ENCODE measurements at regions of chr12 and their contacts with region 1.

Region 1: GRCh38 chr12:66087365-66087943 is 43.1 kb downstream of the LLPH start:
- DNase-seq: no peak
- H3K4me3 ChIP-seq: no peak overlapping the region
- H3K27ac ChIP-seq: no peak overlapping the region
- H3K4me1 ChIP-seq: peaks cover 0 to 3% (median 0%) of the 10 kb centered on the region in 4 donors
- H3K27me3 ChIP-seq: no peaks in the 10 kb centered on the region
- CTCF ChIP-seq: peak; percentile 73 to 82 (median 74)
- EP300 ChIP-seq: no peak
- POLR2A ChIP-seq: no peak

Region 2: GRCh38 chr12:65556681-65557437 is 530.6 kb before region 1 on chr12:
- intact Hi-C with region 1: loop called (anchors 2 kb)
- DNase-seq: peak; percentile 93
- H3K4me3 ChIP-seq: no peak overlapping the region
- H3K27ac ChIP-seq: no peak overlapping the region
- H3K4me1 ChIP-seq: peaks cover 0 to 6% (median 2%) of the 10 kb centered on the region in 4 donors
- H3K27me3 ChIP-seq: no peaks in the 10 kb centered on the region
- CTCF ChIP-seq: peak; percentile 78 to 92 (median 85)
- EP300 ChIP-seq: no peak
- POLR2A ChIP-seq: no peak

Region 3: GRCh38 chr12:65602610-65603295 is 484.7 kb before region 1 on chr12:
- intact Hi-C with region 1: loop called (anchors 2 kb)
- DNase-seq: no peak
- H3K4me3 ChIP-seq: peak overlapping the region; percentile 12 to 38 (median 17)
- H3K27ac ChIP-seq: peak overlapping the region; percentile 1 to 44 (median 28)
- H3K4me1 ChIP-seq: peaks cover 12 to 21% (median 21%) of the 10 kb centered on the region in 4 donors
- H3K27me3 ChIP-seq: peaks cover 0 to 11% (median 0%) of the 10 kb centered on the region in 4 donors
- CTCF ChIP-seq: peak; percentile 60 to 70 (median 69)
- EP300 ChIP-seq: no peak
- POLR2A ChIP-seq: no peak

Region 4: DNA sequence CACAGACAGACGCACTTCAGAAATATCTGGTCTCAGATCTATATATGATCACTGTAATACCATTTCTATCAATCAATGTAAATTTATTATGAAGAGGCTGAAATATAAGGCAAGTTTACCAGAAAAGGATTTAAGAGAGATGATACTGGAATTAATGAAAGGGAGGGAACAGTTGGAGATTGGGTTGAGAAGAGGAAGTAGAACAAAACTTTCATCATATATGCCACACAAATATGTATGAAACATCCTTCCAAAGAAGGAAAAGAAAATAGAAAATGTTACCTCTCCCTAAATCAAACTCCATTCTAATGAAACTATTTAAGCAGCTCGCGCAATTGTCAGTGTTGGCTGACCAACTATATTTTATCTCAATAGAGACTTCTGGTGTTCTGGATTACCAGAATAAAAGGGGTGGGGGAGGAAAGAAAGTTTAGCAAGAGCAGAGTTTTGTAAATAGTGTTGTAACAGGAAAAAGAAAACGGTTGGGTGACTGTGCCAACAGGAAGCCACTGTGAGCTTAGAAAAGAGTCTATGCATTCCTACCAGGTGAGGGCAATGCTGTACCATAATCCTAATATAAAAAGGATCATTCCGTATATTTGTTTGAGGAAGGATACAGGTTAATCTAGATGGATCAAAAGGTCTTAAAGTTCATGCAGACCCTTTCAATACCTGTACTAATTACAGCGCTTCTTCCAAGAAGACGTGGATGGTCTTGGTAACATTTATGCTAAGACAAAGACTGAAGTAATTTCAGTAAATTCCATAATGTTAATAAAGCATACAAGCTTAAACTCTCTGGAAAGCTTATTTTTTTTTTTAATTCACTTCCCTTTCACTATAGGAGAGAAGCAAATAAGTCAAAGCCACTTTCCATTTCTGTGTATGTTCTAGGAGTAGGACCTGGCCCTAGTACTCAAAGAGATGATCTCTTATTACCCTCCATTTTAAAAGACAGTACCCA is 57.6 kb after region 1 on chr12:
- intact Hi-C with region 1: no loop called
- DNase-seq: no peak
- H3K4me3 ChIP-seq: no peak overlapping the region
- H3K27ac ChIP-seq: peak overlapping the region; percentile 4 to 47 (median 26)
- H3K4me1 ChIP-seq: peaks cover 0 to 13% (median 5%) of the 10 kb centered on the region in 4 donors
- H3K27me3 ChIP-seq: no peaks in the 10 kb centered on the region
- CTCF ChIP-seq: peak; percentile 42 to 60 (median 46)
- EP300 ChIP-seq: no peak
- POLR2A ChIP-seq: no peak

Measured in esophagus muscularis mucosa (tissue), 4 donors.